ENCODE measurements at regions of chr5 and their contacts with region 1.

Region 1: GRCh38 chr5:28473531-28474107 is 1435.2 kb upstream of the CDH9 start:
- DNase-seq: no peak
- ATAC-seq: peak; percentile 64
- H3K4me3 ChIP-seq: no peak overlapping the region
- H3K27ac ChIP-seq: no peak overlapping the region
- H3K4me1 ChIP-seq: no peaks in the 10 kb centered on the region
- H3K27me3 ChIP-seq: no peaks in the 10 kb centered on the region
- CTCF ChIP-seq: peak in 1 of 3 experiments; percentile 19; a peak in 2 of 6 replicates
- EP300 ChIP-seq: no peak
- POLR2A ChIP-seq: no peak
- RAD21 ChIP-seq: no peak

Region 2: GRCh38 chr5:28344803-28345433 is 128.7 kb before region 1 on chr5:
- CTCF ChIA-PET with region 1: interaction called, 36 read pairs
- POLR2A ChIA-PET with region 1: no interaction called
- RAD21 ChIA-PET with region 1: interaction called, 10 read pairs
- SMC1A ChIA-PET with region 1: interaction called, 39 read pairs
- in situ Hi-C with region 1: no loop called
- intact Hi-C with region 1: no loop called
- DNase-seq: peak; percentile 0
- ATAC-seq: peak; percentile 80
- H3K4me3 ChIP-seq: no peak overlapping the region
- H3K27ac ChIP-seq: no peak overlapping the region
- H3K4me1 ChIP-seq: no peaks in the 10 kb centered on the region
- H3K27me3 ChIP-seq: no peaks in the 10 kb centered on the region
- CTCF ChIP-seq: peak; percentile 46 to 56 (median 54); a peak in 4 of 6 replicates
- EP300 ChIP-seq: no peak
- POLR2A ChIP-seq: no peak
- RAD21 ChIP-seq: peak; percentile 54

Region 3: DNA sequence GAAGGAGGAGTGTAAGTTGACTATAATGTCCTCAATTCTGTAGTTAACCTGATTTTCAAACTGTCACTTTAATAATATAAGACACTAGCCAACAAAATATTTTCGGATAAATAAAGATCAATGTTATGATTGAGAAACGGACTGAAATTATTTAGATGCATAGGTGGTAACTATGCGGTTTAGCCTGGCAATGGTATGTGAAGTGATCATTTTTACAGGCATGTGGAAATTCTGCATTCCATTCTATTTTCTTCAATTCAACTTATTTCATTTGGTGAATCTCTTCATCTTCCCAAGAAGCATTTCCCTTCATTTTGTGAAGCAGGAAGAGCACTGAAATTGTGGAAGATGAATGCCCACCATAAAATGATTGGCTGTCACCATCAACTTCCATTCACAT is 22.3 kb after region 1 on chr5:
- CTCF ChIA-PET with region 1: interaction called, 23 read pairs
- POLR2A ChIA-PET with region 1: no interaction called
- RAD21 ChIA-PET with region 1: interaction called, 6 read pairs
- SMC1A ChIA-PET with region 1: interaction called, 10 read pairs
- in situ Hi-C with region 1: no loop called
- intact Hi-C with region 1: no loop called
- DNase-seq: no peak
- ATAC-seq: no peak
- H3K4me3 ChIP-seq: no peak overlapping the region
- H3K27ac ChIP-seq: no peak overlapping the region
- H3K4me1 ChIP-seq: no peaks in the 10 kb centered on the region
- H3K27me3 ChIP-seq: no peaks in the 10 kb centered on the region
- CTCF ChIP-seq: no peak
- EP300 ChIP-seq: no peak
- POLR2A ChIP-seq: no peak
- RAD21 ChIP-seq: no peak

Region 4: DNA sequence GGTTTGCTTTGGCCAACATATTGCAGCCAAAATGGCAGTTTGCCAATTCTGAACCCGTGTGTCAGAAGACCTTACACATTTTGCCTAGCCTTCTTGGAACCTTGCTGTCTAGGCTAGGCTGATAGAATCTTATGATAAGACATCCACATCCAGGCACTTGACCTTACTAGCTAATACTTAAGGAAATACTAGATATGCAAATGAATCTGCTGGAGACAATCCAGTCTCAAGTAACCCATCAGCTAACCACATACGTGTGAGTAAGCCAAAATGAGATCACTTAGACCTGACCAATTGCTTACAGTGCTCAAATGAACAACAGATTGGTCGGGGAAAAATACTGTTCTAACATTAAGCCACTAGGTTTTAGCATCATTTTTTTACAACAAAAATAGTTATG is 69.4 kb after region 1 on chr5:
- CTCF ChIA-PET with region 1: interaction called, 20 read pairs
- POLR2A ChIA-PET with region 1: no interaction called
- RAD21 ChIA-PET with region 1: interaction called, 10 read pairs
- SMC1A ChIA-PET with region 1: interaction called, 13 read pairs
- in situ Hi-C with region 1: no loop called
- intact Hi-C with region 1: no loop called
- DNase-seq: no peak
- ATAC-seq: peak; percentile 87
- H3K4me3 ChIP-seq: no peak overlapping the region
- H3K27ac ChIP-seq: no peak overlapping the region
- H3K4me1 ChIP-seq: no peaks in the 10 kb centered on the region
- H3K27me3 ChIP-seq: no peaks in the 10 kb centered on the region
- CTCF ChIP-seq: no peak
- EP300 ChIP-seq: no peak
- POLR2A ChIP-seq: no peak
- RAD21 ChIP-seq: no peak

Region 5: DNA sequence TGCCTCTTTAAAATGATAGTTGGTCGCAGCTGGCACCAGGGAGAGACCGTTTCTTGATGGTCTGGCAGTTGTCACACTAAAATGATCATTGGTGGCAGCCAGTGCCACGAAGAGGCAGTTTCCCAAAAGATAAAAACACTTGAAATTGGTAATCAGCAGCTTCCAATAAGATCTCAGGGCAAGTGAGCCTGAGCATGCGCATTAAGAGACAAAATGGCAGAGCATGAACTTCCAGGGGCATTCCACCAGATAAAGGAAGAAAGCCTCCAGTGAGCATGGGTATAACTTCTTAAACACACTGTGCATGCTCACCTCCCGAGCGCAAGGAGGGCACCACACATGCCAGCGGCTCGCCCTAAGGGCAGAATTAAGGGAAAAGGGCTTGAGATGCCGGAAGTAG is 159.0 kb after region 1 on chr5:
- CTCF ChIA-PET with region 1: interaction called, 6 read pairs
- POLR2A ChIA-PET with region 1: no interaction called
- RAD21 ChIA-PET with region 1: interaction called, 4 read pairs
- SMC1A ChIA-PET with region 1: interaction called, 10 read pairs
- in situ Hi-C with region 1: no loop called
- intact Hi-C with region 1: no loop called
- DNase-seq: no peak
- ATAC-seq: no peak
- H3K4me3 ChIP-seq: no peak overlapping the region
- H3K27ac ChIP-seq: no peak overlapping the region
- H3K4me1 ChIP-seq: no peaks in the 10 kb centered on the region
- H3K27me3 ChIP-seq: no peaks in the 10 kb centered on the region
- CTCF ChIP-seq: no peak
- EP300 ChIP-seq: no peak
- POLR2A ChIP-seq: no peak
- RAD21 ChIP-seq: no peak

Region 6: GRCh38 chr5:28748446-28748845 is 274.8 kb after region 1 on chr5:
- CTCF ChIA-PET with region 1: interaction called, 14 read pairs
- POLR2A ChIA-PET with region 1: no interaction called
- RAD21 ChIA-PET with region 1: interaction called, 3 read pairs
- SMC1A ChIA-PET with region 1: interaction called, 4 read pairs
- in situ Hi-C with region 1: no loop called
- intact Hi-C with region 1: no loop called
- DNase-seq: no peak
- ATAC-seq: no peak
- H3K4me3 ChIP-seq: no peak overlapping the region
- H3K27ac ChIP-seq: no peak overlapping the region
- H3K4me1 ChIP-seq: no peaks in the 10 kb centered on the region
- H3K27me3 ChIP-seq: no peaks in the 10 kb centered on the region
- CTCF ChIP-seq: no peak
- EP300 ChIP-seq: no peak
- POLR2A ChIP-seq: no peak
- RAD21 ChIP-seq: no peak

Measured in GM12878 (cell line).